Prostate gland (tissue), 2 donors: ENCODE measurements at regions of chr13 and their contacts with region 1.

Region 1: GRCh38 chr13:38686577-38687245 is at the start of gene FREM2:
- DNase-seq: peak; percentile 46
- H3K4me3 ChIP-seq: peak within 1 kb of the TSS; percentile 29 to 35
- H3K27ac ChIP-seq: no peak within 1 kb of the TSS
- H3K4me1 ChIP-seq: no peaks in the 10 kb centered on the region
- H3K27me3 ChIP-seq: no peaks in the 10 kb centered on the region
- CTCF ChIP-seq: no peak
- POLR2A ChIP-seq: no peak
- total RNA-seq, gene FREM2: 3.1 to 5.9 TPM

Region 2: GRCh38 chr13:38767528-38768265 is 81.0 kb after region 1 on chr13:
- intact Hi-C with region 1: loop called (anchors 2 kb)
- DNase-seq: no peak
- H3K4me3 ChIP-seq: no peak overlapping the region
- H3K27ac ChIP-seq: no peak overlapping the region
- H3K4me1 ChIP-seq: no peaks in the 10 kb centered on the region
- H3K27me3 ChIP-seq: no peaks in the 10 kb centered on the region
- CTCF ChIP-seq: no peak
- POLR2A ChIP-seq: no peak

Region 3: GRCh38 chr13:38872693-38873092 is 186.0 kb after region 1 on chr13:
- intact Hi-C with region 1: loop called (anchors 2 kb)
- DNase-seq: no peak
- H3K4me3 ChIP-seq: no peak overlapping the region
- H3K27ac ChIP-seq: no peak overlapping the region
- H3K4me1 ChIP-seq: no peaks in the 10 kb centered on the region
- H3K27me3 ChIP-seq: no peaks in the 10 kb centered on the region
- CTCF ChIP-seq: no peak
- POLR2A ChIP-seq: no peak

Region 4: GRCh38 chr13:38914070-38914469 is 227.4 kb after region 1 on chr13:
- intact Hi-C with region 1: loop called (anchors 5 kb)
- DNase-seq: no peak
- H3K4me3 ChIP-seq: no peak overlapping the region
- H3K27ac ChIP-seq: no peak overlapping the region
- H3K4me1 ChIP-seq: no peaks in the 10 kb centered on the region
- H3K27me3 ChIP-seq: no peaks in the 10 kb centered on the region
- CTCF ChIP-seq: no peak
- POLR2A ChIP-seq: no peak